ENCODE measurements at regions of chr10 and their contacts with region 1.

Region 1: DNA sequence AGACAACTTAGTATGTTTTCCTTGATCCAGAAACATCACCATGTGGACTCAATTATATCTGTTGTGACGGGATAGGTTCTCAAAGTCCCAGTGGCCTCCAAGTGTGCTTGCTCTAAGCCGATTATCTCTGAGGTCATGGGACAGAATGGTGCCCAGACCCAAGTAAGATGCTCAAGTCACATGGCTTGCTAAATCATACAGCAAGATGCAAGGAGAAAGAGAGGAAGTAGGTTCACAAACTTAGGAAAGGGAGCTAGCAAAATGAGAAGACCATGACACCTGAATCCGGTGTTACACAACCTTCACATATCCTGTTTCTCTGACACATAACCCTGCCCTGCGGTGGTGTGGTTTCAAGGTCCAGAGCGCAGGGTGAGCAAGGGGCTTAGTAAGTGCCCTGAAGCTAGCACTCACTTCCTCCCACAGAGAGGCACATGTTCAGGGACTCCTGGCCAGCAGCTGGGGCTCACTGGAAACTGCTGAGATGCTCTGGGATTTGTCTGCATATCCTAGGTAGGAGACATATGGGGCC is 590.9 kb upstream of the ANKRD30A start:
- DNase-seq: no peak
- ATAC-seq: no peak
- H3K4me3 Mint-ChIP-seq: no peak overlapping the region
- H3K27ac Mint-ChIP-seq: no peak overlapping the region
- H3K4me1 Mint-ChIP-seq: peaks cover 2% of the 10 kb centered on the region
- H3K27me3 Mint-ChIP-seq: no peaks in the 10 kb centered on the region
- CTCF ChIP-seq: no peak

Region 2: GRCh38 chr10:36489611-36490228 is 44.8 kb before region 1 on chr10:
- CTCF ChIA-PET with region 1: no interaction called
- POLR2A ChIA-PET with region 1: interaction called, 10 read pairs
- DNase-seq: no peak
- ATAC-seq: no peak
- H3K4me3 Mint-ChIP-seq: no peak overlapping the region
- H3K27ac Mint-ChIP-seq: no peak overlapping the region
- H3K4me1 Mint-ChIP-seq: no peaks in the 10 kb centered on the region
- H3K27me3 Mint-ChIP-seq: no peaks in the 10 kb centered on the region
- CTCF ChIP-seq: no peak